ENCODE measurements at regions of chr19 and their contacts with region 1.

Region 1: DNA sequence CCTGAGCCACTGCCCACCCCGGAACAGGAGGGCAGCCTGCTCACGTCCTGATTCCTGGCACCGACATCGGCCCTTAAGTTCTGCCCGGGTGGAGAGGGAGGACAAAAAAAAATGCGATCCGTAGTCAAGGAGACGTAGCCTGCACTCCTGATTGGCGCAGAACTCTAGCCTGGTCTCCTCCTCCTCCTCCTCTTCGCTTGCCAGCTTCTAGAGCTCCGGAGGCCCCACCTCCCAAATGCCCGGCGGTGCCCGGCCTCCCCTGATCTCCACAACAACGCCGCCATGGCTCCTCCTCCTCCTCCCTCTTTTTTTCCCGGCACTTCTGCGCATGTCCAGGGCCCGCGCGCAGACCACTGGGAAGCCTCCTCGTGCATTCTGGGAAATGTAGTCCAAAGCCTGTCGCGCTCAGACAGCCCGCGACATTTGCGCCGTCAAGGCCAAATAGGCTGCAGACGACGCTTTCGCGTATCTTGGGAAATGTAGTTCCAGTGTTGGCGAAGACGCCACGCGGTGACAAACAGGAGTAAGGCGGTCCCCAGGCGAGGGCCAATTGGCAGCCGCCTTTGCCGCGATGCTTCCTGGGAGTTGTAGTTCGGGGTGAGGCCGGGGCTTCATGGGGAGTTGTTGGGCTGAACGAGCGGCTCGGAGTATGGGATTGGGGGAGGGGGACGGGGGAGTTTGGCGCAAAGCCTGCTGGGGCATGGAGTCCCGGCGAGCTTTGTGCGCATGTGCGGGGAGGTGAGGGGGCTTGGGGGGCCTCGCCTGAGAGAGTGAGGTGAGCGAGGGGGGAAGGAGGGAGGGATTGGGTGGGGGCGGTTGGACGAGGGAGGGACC is at the start of gene ZNF444:
- DNase-seq: peak; percentile 93 to 100 (median 100)
- ATAC-seq: peak; percentile 91
- H3K4me3 ChIP-seq: peak within 1 kb of the TSS; percentile 60
- H3K4me3 Mint-ChIP-seq: peak within 1 kb of the TSS; percentile 88 to 97 (median 92)
- H3K27ac ChIP-seq: peak within 1 kb of the TSS; percentile 85
- H3K27ac Mint-ChIP-seq: peak within 1 kb of the TSS; percentile 84 to 98 (median 91)
- H3K4me1 ChIP-seq: peaks cover 4 to 22% of the 10 kb centered on the region in 2 donors
- H3K4me1 Mint-ChIP-seq: peaks cover 27 to 49% (median 43%) of the 10 kb centered on the region in 7 donors
- H3K27me3 ChIP-seq: no peaks in the 10 kb centered on the region
- H3K27me3 Mint-ChIP-seq: peaks cover 0 to 4% (median 0%) of the 10 kb centered on the region in 5 donors
- total RNA-seq, gene ZNF444: 22.2 to 49.6 (median 35.7) TPM

Region 2: GRCh38 chr19:55385740-55386529 is 754.9 kb before region 1 on chr19 and contains the start of gene RPL28:
- CTCF ChIA-PET with region 1: no interaction called
- POLR2A ChIA-PET with region 1: no interaction called
- intact Hi-C with region 1: loop called in 1 of 2 experiments (anchors 2 kb)
- DNase-seq: peak; percentile 92 to 99 (median 99)
- ATAC-seq: peak; percentile 89
- H3K4me3 ChIP-seq: peak within 1 kb of the TSS; percentile 92
- H3K4me3 Mint-ChIP-seq: peak within 1 kb of the TSS; percentile 94 to 100 (median 100)
- H3K27ac ChIP-seq: peak within 1 kb of the TSS; percentile 91
- H3K27ac Mint-ChIP-seq: peak within 1 kb of the TSS; percentile 91 to 100 (median 99)
- H3K4me1 ChIP-seq: peaks cover 45 to 53% of the 10 kb centered on the region in 2 donors
- H3K4me1 Mint-ChIP-seq: peaks cover 41 to 79% (median 70%) of the 10 kb centered on the region in 7 donors
- H3K27me3 ChIP-seq: no peaks in the 10 kb centered on the region
- H3K27me3 Mint-ChIP-seq: peaks cover 0 to 3% (median 0%) of the 10 kb centered on the region in 5 donors
- total RNA-seq, gene RPL28: 2,549 to 3,799 (median 3,242) TPM

Region 3: GRCh38 chr19:55674841-55675660 is 465.7 kb before region 1 on chr19 and contains the start of gene EPN1:
- CTCF ChIA-PET with region 1: no interaction called
- POLR2A ChIA-PET with region 1: no interaction called
- intact Hi-C with region 1: loop called in 1 of 2 experiments (anchors 1 kb)
- DNase-seq: peak; percentile 88 to 98 (median 96)
- ATAC-seq: peak; percentile 93
- H3K4me3 ChIP-seq: peak within 1 kb of the TSS; percentile 72
- H3K4me3 Mint-ChIP-seq: peak within 1 kb of the TSS; percentile 89 to 99 (median 97)
- H3K27ac ChIP-seq: peak within 1 kb of the TSS; percentile 84
- H3K27ac Mint-ChIP-seq: peak within 1 kb of the TSS; percentile 90 to 99 (median 96)
- H3K4me1 ChIP-seq: peaks cover 26 to 28% of the 10 kb centered on the region in 2 donors
- H3K4me1 Mint-ChIP-seq: peaks cover 49 to 72% (median 58%) of the 10 kb centered on the region in 7 donors
- H3K27me3 ChIP-seq: no peaks in the 10 kb centered on the region
- H3K27me3 Mint-ChIP-seq: no peaks in the 10 kb centered on the region
- total RNA-seq, gene EPN1: 45.2 to 67.1 (median 52.2) TPM

Region 4: DNA sequence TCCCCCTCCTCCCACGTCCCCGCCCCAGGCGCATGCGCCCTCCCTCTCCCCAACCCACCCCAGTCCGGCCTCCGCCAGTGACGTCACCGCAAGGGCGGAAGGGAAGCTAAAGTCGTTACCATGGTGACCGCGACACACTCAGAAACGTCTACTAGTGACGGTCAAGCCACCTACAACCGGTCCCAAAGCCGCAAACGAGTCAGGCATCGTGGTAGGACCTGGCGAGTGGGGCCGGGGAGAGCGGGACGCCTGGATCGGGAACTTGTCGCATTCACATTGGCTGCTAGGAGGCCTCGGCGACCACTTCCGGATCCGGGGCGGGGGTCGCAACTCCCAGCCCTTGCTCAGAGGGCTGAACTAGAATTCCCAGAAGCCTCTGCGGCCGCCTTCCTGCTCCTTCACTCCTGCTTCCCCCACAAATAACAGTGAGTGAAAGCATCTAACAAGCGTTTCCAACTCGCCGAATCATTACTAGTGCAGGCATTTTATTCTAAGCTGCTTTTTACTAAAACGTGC is 173.8 kb after region 1 on chr19 and contains the start of gene ZSCAN5A:
- CTCF ChIA-PET with region 1: no interaction called
- POLR2A ChIA-PET with region 1: interaction called, 4 read pairs
- intact Hi-C with region 1: loop called (anchors 1 kb)
- DNase-seq: peak; percentile 93 to 99 (median 99)
- ATAC-seq: peak; percentile 85
- H3K4me3 ChIP-seq: peak within 1 kb of the TSS; percentile 86
- H3K4me3 Mint-ChIP-seq: peak within 1 kb of the TSS; percentile 79 to 100 (median 96)
- H3K27ac ChIP-seq: peak within 1 kb of the TSS; percentile 97
- H3K27ac Mint-ChIP-seq: peak within 1 kb of the TSS; percentile 95 to 100 (median 99)
- H3K4me1 ChIP-seq: peaks cover 4 to 10% of the 10 kb centered on the region in 2 donors
- H3K4me1 Mint-ChIP-seq: peaks cover 13 to 41% (median 26%) of the 10 kb centered on the region in 7 donors
- H3K27me3 ChIP-seq: no peaks in the 10 kb centered on the region
- H3K27me3 Mint-ChIP-seq: no peaks in the 10 kb centered on the region
- total RNA-seq, gene ZSCAN5A: 8.0 to 15.4 (median 11.8) TPM

Region 5: GRCh38 chr19:56538254-56538760 is 397.5 kb after region 1 on chr19:
- CTCF ChIA-PET with region 1: no interaction called
- POLR2A ChIA-PET with region 1: no interaction called
- intact Hi-C with region 1: loop called in 1 of 2 experiments (anchors 2 kb)
- DNase-seq: peak; percentile 84 to 94 (median 89)
- ATAC-seq: peak; percentile 94
- H3K4me3 ChIP-seq: peak overlapping the region; percentile 87
- H3K4me3 Mint-ChIP-seq: peak overlapping the region; percentile 88 to 95 (median 93)
- H3K27ac ChIP-seq: peak overlapping the region; percentile 83
- H3K27ac Mint-ChIP-seq: peak overlapping the region; percentile 90 to 97 (median 94)
- H3K4me1 ChIP-seq: peaks cover 5% of the 10 kb centered on the region in 2 donors
- H3K4me1 Mint-ChIP-seq: peaks cover 13 to 27% (median 21%) of the 10 kb centered on the region in 7 donors
- H3K27me3 ChIP-seq: no peaks in the 10 kb centered on the region
- H3K27me3 Mint-ChIP-seq: peaks cover 0 to 4% (median 0%) of the 10 kb centered on the region in 5 donors